Pancreas (tissue), 10 donors: ENCODE measurements at regions of chr11 and their contacts with region 1.

Region 1: DNA sequence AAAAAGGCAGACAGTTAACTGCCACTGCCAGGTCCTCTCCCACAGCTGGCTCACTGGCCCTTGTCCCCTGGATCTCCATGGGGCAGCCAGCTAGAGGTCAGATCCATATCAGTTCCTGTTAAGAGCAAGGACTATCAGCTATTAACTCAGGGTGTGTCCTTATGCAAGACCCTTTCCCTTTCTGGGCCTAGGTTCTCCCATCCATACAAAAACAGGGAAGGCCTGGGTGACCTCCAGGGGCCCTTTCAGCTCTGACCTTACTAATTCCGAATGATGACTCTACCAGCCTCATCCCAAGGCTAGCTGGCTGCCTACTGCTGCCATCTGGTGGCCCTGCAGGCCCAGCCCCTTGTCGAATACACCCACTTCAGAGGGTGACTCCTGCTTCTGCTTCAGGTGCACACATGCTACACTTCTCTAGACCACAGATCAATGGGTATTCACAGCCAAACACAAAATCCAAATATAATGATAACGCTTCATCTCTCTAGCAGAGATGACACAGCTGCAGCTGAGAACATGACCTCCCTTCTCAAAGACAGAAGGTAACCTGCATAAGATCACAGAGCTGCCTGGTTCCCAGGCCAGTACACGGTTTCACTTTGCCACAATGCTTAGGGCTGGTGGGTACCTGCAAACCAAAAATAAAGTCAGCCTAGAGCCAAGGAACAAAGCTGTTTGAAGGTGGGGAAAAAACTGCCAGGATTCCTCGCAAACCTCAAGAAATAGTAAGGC is 34.1 kb downstream of the SERGEF start:
- DNase-seq: peak in 5 of 6 donors; percentile 12 to 65 (median 43)
- ATAC-seq: peak; percentile 60 to 92 (median 88)
- H3K4me3 ChIP-seq: no peak overlapping the region
- H3K27ac ChIP-seq: no peak overlapping the region
- H3K4me1 ChIP-seq: no peaks in the 10 kb centered on the region
- H3K27me3 ChIP-seq: no peaks in the 10 kb centered on the region
- CTCF ChIP-seq: peak; percentile 13 to 48 (median 37)

Region 2: GRCh38 chr11:17598700-17599459 is 379.8 kb before region 1 on chr11:
- intact Hi-C with region 1: loop called in 1 of 3 experiments (anchors 10 kb)
- DNase-seq: peak; percentile 26 to 93 (median 73)
- ATAC-seq: peak; percentile 80 to 97 (median 94)
- H3K4me3 ChIP-seq: no peak overlapping the region
- H3K27ac ChIP-seq: no peak overlapping the region
- H3K4me1 ChIP-seq: no peaks in the 10 kb centered on the region
- H3K27me3 ChIP-seq: no peaks in the 10 kb centered on the region
- CTCF ChIP-seq: peak; percentile 75 to 93 (median 88)

Region 3: DNA sequence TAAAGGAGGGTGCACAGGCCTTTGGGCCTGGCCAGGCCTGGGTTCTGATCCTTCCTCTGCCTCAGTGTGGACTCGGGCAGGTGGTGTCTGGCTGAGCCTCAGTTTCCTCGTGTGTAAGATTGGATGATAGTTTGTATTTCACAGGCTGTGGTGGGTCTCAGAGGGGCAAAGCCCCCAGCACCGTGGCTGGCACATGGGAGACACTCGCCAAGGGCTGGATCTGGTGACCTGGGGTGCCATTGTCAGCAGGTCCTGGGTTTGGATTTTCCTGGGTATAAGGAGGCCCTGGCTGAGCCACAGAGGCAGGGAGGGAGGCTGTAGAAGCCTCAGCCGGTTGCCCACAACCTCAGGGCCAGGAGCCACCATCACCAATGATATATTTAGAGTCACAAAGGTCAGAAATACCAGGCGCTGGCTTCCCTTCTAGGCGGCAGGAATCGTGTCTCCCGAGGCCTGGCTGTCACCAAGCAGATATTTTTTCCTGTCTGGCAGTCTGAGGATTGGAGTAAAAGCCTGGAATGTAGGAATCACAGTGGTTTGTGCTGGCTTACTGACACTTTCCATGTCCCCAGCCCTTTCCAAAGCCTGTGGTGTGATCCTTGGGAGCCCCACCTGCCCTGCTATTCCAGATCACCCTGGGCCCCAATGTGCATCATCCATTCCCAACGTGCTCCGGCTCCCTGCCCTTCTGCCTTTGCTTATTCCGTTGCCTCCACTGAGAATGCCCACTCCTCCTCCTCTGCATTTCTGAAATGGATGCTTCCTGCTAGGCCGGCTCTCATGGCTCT is 228.5 kb before region 1 on chr11:
- intact Hi-C with region 1: loop called in 1 of 3 experiments (anchors 10 kb)
- DNase-seq: peak in 2 of 6 donors; percentile 28 to 34
- ATAC-seq: no peak
- H3K4me3 ChIP-seq: no peak overlapping the region
- H3K27ac ChIP-seq: no peak overlapping the region
- H3K4me1 ChIP-seq: no peaks in the 10 kb centered on the region
- H3K27me3 ChIP-seq: no peaks in the 10 kb centered on the region
- CTCF ChIP-seq: no peak

Region 4: DNA sequence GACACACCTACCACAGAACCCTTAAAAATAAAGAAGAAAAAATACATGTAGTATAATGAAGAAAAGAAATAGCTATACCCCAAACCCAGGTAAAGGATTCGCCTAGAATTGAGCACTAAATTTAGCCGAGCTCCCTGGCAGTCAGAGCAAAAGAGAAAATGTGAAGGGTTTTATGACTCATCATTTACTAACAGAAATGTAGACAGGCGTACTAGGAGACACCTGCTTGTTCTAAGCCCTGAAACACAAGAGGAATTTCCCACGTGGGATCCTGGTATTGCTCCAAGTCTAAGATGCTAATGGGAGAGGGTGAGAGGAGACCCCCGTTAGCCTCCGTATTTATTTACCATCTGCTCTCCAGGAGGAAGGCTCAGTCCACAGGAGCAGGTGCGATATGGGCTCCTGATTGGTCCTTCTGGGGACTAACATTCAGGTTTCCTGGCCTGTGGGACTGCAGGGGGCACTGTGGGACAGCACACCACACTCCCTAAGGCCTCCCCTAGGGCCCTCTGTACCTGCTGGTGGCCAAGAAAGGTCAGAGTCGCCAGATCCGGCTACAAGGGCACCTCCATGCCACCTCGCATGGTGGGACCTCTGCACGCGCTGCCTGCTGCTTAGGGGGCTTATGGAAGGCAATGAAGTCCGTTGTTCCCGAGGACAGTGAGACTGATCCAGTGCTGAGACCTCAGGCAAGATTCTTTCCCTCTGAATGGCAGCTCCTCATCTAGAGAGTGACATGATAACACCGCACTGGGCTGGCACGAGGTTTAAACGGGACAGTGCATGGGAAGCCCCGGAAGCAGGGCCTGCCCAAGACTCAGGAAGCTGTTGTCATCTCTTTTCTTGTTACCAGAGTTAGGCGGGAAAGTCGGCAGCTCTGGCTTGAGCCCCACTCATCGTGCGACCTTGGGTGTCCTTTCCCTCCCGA is 218.4 kb before region 1 on chr11:
- intact Hi-C with region 1: loop called (anchors 10 kb)
- DNase-seq: peak; percentile 25 to 68 (median 42)
- ATAC-seq: peak in 3 of 4 donors; percentile 88 to 96 (median 89)
- H3K4me3 ChIP-seq: no peak overlapping the region
- H3K27ac ChIP-seq: no peak overlapping the region
- H3K4me1 ChIP-seq: no peaks in the 10 kb centered on the region
- H3K27me3 ChIP-seq: no peaks in the 10 kb centered on the region
- CTCF ChIP-seq: peak in 3 of 4 donors; percentile 16 to 36 (median 25)

Region 5: DNA sequence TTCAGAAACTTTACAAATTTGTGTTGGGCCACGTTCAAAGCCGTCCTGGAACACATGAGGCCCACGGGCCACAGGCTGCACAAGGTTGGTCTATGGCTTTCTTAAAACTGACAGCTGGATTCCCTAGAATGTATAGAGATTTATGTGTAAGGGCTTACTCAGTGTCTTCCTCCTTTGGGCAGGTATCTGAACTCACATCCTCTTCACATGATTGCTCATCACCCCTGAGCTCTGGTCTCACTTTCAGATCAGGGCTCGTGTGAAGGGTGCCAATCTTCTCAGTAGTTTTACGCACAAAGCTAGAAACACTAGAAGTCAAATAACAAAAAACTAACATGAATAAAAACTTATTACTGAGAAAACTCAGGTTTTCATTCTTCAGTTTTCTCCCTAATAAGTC is 316.1 kb after region 1 on chr11:
- intact Hi-C with region 1: no loop called
- DNase-seq: no peak
- ATAC-seq: no peak
- H3K4me3 ChIP-seq: no peak overlapping the region
- H3K27ac ChIP-seq: no peak overlapping the region
- H3K4me1 ChIP-seq: no peaks in the 10 kb centered on the region
- H3K27me3 ChIP-seq: no peaks in the 10 kb centered on the region
- CTCF ChIP-seq: no peak